Heart left ventricle (tissue), 16 donors: ENCODE measurements at regions of chr6 and their contacts with region 1.

Region 1: DNA sequence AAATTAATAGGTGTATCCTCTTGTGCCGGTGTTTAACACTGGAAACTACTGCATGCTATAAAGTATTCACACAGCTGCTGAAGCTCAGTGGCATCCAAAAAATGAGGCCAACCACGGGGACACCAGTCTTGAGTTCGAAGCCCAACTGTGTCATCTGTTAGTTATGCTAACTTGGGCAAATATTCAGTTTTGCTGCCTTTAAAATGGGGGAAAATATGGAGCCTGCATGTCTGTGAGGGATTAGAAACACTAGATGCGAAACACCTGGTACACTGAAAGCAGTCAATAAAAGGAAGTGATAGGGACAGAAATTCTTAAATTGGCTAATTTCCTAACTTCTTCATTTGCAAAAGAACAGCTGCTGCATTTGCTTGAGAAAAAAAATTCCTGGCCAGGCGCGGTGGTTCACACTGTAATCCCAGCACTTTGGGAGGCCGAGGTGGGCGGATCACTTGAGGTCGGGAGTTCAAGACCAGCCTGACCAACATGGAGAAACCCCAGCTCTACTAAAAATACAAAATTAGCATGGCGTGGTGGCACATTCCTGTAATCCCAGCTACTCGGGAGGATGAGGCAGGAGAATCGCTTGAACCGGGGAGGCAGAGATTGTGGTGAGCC is 36.6 kb upstream of the MLIP start:
- DNase-seq: peak; percentile 21 to 52 (median 34)
- ATAC-seq: peak; percentile 33 to 72 (median 55)
- H3K4me3 ChIP-seq: no peak overlapping the region
- H3K27ac ChIP-seq: peak overlapping the region in 4 of 12 donors; percentile 9 to 31 (median 22)
- H3K4me1 ChIP-seq: peaks cover 0 to 80% (median 40%) of the 10 kb centered on the region in 12 donors
- H3K27me3 ChIP-seq: no peaks in the 10 kb centered on the region
- CTCF ChIP-seq: no peak
- POLR2A ChIP-seq: no peak

Region 2: DNA sequence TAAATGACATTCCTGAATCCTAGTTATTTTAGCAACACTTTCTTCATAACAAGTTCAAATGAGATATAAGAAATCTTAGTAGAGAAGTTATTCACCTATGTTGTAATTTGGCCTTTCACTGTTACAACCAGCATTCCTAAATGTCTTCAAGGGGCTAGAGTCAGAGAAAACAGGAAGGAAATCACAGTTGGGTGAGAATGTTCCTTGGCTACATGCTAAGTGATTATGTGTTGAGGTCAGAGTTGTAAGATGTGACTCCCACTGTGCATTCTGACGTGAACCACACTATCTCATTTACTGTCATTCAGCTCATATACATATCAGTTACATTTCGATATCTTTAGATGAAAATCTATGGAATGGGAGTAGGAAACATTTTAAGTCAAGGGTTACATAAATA is 14.4 kb before region 1 on chr6:
- intact Hi-C with region 1: loop called in 1 of 10 experiments (anchors 1 kb)
- DNase-seq: no peak
- ATAC-seq: peak in 2 of 4 donors; percentile 55 to 57
- H3K4me3 ChIP-seq: no peak overlapping the region
- H3K27ac ChIP-seq: peak overlapping the region in 9 of 12 donors; percentile 3 to 78 (median 66)
- H3K4me1 ChIP-seq: peaks cover 0 to 55% (median 26%) of the 10 kb centered on the region in 12 donors
- H3K27me3 ChIP-seq: no peaks in the 10 kb centered on the region
- CTCF ChIP-seq: no peak
- POLR2A ChIP-seq: no peak